IMR-90 (cell line): ENCODE measurements at regions of chr11 and their contacts with region 1.

Region 1: DNA sequence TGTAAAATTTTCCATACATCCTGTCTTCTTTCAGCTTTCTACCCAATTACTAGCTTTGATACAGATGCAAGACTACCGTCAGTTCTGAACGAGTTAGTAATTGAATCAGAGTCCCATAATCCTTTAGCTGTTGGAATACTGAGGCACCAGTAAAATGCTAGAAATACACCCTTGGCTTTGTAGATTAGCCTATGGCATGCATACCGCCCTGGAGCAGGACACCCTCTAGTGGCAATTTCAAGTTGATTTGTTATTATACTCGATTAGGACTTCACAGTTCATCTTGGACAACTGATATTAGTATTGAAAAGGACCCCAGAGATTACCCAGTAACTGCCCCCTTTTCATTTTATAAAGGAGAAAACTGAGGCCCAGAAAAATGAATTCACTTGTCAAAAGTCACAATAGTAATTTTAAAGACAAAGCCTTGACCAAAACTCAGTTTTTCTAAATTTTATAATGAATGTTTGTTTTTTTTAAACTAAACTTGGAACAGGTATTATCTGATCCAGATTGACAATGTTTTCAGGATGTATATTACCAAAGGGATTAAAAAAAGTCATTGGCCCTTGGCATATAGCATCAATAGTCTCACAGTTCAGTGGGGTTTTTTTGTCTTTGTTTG is 72.6 kb downstream of the HIPK3 start:
- DNase-seq: peak; percentile 72
- ATAC-seq: peak; percentile 68
- H3K4me3 ChIP-seq: no peak overlapping the region
- H3K27ac ChIP-seq: no peak overlapping the region
- H3K4me1 ChIP-seq: no peaks in the 10 kb centered on the region; the same call in 1 of the 2 replicates
- H3K27me3 ChIP-seq: no peaks in the 10 kb centered on the region
- CTCF ChIP-seq: peak; percentile 73
- POLR2A ChIP-seq: no peak
- RAD21 ChIP-seq: peak; percentile 85

Region 2: DNA sequence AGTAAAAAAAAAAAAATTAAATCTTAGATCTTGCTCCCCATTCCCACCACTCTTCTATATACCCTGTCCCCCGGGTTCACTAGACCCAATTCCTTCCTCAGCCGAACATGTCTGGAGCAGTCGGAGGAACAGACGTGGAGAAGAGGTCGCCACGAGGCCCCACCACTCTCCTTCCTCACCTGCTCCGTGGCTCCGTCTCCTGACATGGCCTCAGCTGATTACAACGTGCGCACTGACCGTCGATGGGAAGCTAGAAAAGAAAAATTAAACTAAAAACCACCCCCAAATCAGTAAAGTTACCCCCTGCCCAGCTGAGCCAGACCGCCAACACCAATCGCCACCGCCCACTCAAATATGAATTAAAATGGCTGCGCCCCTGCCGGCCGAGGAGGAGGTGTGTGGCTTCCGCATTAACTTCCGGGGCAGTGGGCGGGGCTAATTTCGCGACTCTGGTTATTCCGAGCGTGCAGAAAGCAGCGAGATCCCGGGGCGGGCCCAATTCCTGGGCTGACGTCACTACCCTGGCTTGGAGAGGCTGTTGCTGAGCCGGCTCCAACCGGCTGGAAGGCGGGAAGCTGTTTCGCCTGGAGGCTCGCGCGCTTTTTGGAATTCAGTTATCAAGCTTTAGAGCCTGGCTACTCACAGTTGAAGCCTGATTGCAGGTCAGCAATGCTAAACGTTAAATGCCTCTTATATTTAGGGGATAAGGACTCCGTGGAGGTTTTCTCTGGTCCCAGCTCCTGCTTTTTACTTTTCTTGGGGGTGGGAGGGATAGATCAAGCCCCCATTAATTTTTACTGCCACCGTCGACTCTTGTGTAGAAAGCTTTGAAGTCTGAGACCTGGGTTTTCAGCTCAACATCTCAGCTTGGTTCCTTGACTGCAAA is 168.5 kb before region 1 on chr11 and contains the start of gene CSTF3:
- CTCF ChIA-PET with region 1: interaction called, 3 read pairs
- POLR2A ChIA-PET with region 1: no interaction called
- dilution Hi-C with region 1: no loop called
- in situ Hi-C with region 1: loop called (anchors 5 kb)
- intact Hi-C with region 1: loop called (anchors 1 kb)
- DNase-seq: peak; percentile 98
- ATAC-seq: peak; percentile 97
- H3K4me3 ChIP-seq: peak within 1 kb of the TSS; percentile 59
- H3K27ac ChIP-seq: peak within 1 kb of the TSS; percentile 69
- H3K4me1 ChIP-seq: peaks cover 4% of the 10 kb centered on the region
- H3K27me3 ChIP-seq: no peaks in the 10 kb centered on the region
- CTCF ChIP-seq: peak; percentile 42; the same call in 1 of the 2 replicates
- POLR2A ChIP-seq: peak; percentile 90
- RAD21 ChIP-seq: no peak; the same call in 1 of the 2 replicates
- total RNA-seq, gene CSTF3: 14.5 and 31.4 TPM in 2 replicates